Vagina (tissue), 2 donors: ENCODE measurements at regions of chr2 and their contacts with region 1.

Region 1: GRCh38 chr2:49618491-49618890 is 464.2 kb upstream of the FSHR start:
- DNase-seq: no peak
- H3K4me3 ChIP-seq: no peak overlapping the region
- H3K27ac ChIP-seq: no peak overlapping the region
- H3K4me1 ChIP-seq: no peaks in the 10 kb centered on the region
- H3K27me3 ChIP-seq: no peaks in the 10 kb centered on the region
- CTCF ChIP-seq: no peak
- POLR2A ChIP-seq: no peak

Region 2: DNA sequence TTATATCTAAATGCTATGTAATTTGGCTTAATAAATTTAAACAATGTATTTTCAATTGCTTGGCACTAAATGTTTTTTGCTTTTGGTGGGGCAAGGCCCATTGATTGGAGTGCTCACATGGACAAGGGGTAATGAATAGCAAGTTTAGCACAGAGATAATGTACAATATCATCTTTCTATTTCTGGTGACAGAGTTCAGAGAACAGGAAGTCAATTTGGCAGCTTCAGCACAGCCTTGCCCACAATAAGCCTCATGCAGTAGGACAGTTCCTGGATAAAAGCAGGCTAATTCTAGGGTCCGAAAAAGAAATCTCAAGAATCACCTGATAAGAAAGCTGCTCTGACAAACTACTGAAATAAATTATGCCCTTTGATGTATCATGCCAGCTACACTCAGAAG is 20.3 kb before region 1 on chr2:
- intact Hi-C with region 1: no loop called
- DNase-seq: no peak
- H3K4me3 ChIP-seq: no peak overlapping the region
- H3K27ac ChIP-seq: no peak overlapping the region
- H3K4me1 ChIP-seq: no peaks in the 10 kb centered on the region
- H3K27me3 ChIP-seq: no peaks in the 10 kb centered on the region
- CTCF ChIP-seq: no peak
- POLR2A ChIP-seq: no peak

Region 3: DNA sequence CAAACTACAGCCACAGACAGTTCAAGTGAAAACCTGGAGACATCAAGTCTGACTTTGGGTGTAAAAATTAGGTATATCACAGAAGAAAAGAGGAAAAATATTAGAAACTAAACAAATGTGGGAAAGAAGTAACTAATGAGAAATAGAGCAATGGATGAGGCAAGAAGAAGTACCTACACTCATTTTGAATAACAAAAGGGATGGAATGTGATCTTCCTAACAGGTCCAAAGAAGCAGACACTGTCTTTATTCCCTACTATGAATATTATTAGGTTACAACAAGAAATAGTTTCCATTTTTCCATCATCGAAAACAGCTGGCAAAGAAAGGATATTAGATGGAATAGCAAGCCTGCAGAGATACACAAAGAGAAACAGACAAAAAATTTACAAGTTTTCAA is 22.1 kb after region 1 on chr2:
- intact Hi-C with region 1: loop called (anchors 1 kb)
- DNase-seq: no peak
- H3K4me3 ChIP-seq: no peak overlapping the region
- H3K27ac ChIP-seq: no peak overlapping the region
- H3K4me1 ChIP-seq: no peaks in the 10 kb centered on the region
- H3K27me3 ChIP-seq: no peaks in the 10 kb centered on the region
- CTCF ChIP-seq: no peak
- POLR2A ChIP-seq: no peak